Left cardiac atrium (tissue), 4 donors: ENCODE measurements at regions of chr3 and their contacts with region 1.

Region 1: GRCh38 chr3:127015282-127016042 is 32.5 kb downstream of the PLXNA1 start:
- DNase-seq: no peak
- ATAC-seq: no peak

Region 2: GRCh38 chr3:127182471-127183367 is 167.3 kb after region 1 on chr3:
- intact Hi-C with region 1: loop called in 1 of 2 experiments (anchors 10 kb)
- DNase-seq: no peak
- ATAC-seq: no peak

Region 3: DNA sequence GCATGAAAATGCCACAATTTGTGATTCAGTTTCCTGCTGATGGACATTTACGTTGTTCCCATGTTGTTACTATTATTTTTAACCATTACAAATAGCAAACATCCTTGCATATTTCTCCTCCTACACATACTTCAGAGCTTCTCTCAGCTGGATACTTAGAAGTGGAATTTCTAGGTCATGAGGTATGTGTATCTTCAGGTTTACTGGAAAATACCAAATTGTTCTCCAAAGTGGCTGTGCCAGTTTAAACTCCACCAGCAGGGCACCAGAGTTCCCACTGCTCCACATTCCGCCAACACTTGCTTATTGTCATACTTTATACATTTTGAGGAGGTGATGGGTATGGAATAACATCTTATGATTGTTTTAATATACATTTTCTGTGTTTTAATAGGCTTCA is 223.1 kb after region 1 on chr3:
- intact Hi-C with region 1: no loop called
- DNase-seq: no peak
- ATAC-seq: no peak

Region 4: DNA sequence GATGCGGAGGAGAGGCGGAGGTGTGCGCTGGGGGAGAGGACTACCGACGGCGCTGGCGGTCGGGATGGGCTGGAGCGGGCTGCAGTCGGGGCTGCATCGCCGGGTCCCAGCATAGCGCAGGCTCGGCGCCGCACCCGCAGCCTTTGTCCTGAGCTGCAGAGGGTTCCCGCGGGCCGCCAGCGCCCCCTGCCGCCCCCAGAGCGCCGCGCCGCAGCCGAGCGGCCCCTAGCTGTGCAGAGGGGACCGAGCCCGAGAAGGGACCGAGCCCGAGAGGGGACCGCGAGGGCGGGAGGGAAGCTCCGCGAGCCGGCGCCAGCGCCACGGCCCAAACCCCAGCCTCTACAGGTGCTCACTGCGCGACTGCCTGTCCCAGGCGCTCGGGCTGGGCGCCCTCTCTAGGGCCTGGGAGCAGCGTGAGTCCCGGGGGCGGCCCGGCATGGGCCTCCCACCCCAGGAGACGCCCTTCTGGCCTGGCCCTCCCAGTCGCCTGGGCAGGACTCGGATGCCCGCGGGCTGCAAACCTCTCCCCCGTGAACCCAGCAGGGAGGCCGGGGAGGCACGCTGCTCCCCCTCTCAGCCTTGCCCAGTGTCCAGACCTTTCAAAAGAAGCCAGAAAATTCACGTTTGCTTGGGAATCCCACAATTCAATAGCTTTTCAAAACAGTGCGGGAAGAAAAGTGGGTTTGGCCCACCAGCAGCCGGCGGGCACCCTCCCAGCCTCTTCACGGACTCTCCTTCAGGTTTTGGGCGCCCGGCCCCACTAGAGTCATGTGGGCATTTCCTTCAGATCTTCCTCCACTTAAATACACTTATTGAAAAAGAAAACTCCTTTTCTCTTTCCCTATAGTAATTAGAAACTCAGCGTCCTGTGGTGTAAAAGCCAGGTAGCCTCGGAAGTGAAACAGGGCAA is 440.3 kb after region 1 on chr3:
- intact Hi-C with region 1: loop called in 1 of 2 experiments (anchors 10 kb)
- DNase-seq: peak; percentile 72
- ATAC-seq: peak; percentile 92 to 93

Region 5: GRCh38 chr3:127723011-127723567 is 707.6 kb after region 1 on chr3:
- intact Hi-C with region 1: no loop called
- DNase-seq: no peak
- ATAC-seq: peak; percentile 39 to 45